ENCODE measurements at regions of chr19 and their contacts with region 1.

Region 1: DNA sequence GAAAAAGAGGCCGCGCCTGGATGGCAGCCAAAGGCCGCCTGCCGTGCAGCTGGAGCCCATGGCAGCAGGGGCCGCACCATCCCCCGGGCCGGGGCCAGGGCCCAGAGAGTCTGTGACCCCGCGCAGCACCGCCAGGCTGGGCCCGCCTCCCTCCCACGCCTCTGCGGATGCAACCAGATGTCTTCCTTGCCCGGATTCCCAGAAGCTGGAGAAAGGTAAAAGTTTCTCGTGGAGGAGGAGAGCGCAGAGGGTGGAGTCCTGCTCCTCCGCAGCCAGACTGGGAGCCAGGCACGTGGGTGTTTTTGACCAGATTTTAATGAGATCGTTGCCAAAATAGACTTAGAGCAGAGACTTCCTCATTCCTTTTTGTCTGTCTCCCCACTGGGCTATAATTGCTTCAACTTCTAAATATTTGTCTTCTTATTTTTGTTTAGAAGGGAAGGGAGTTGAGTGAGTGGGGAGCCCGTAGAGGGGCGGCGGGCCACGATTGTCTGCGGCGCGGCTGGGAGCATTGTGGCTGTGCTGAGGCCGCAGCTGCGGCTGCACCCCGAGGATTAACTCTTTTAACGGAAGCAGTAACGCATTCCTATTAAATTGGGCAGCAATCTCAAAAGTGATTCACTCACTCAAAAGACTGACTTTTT is 22.8 kb upstream of the NDUFS7 start:
- DNase-seq: no peak
- H3K4me3 Mint-ChIP-seq: no peak overlapping the region
- H3K27ac Mint-ChIP-seq: no peak overlapping the region
- H3K4me1 Mint-ChIP-seq: peaks cover 24% of the 10 kb centered on the region
- H3K27me3 Mint-ChIP-seq: no peaks in the 10 kb centered on the region

Region 2: DNA sequence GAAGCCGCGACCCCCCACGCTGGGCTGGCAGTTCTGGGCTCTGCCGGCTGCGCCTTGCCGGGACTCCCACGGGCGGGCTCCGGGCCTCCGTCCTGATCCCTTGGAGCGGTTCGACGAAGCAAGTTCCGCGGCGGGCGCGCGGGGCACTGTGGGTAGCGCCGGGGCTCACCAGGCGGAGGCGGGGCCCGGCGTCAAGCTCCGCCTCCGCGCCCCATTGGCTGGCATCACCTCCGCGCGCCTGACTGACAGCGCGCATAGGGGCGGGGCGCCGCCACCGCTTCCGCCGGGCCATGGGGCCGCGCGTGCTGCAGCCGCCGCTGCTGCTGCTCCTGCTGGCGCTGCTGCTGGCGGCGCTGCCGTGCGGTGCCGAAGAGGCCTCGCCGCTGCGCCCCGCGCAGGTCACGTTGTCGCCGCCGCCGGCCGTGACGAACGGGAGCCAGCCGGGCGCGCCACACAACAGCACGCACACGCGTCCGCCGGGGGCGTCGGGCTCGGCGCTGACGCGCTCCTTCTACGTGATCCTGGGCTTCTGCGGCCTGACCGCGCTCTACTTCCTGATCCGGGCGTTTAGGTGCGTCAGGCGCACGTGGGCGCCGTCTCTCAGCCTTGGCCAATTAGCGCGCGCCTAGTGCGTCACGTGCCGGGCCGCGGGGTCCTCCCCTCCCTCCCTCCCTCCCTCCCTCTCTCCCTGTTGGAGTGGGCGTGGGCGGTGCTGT is 85.5 kb before region 1 on chr19 and contains the start of gene FAM174C:
- intact Hi-C with region 1: loop called (anchors 5 kb)
- DNase-seq: peak; percentile 93
- H3K4me3 Mint-ChIP-seq: peak within 1 kb of the TSS; percentile 92
- H3K27ac Mint-ChIP-seq: peak within 1 kb of the TSS; percentile 96
- H3K4me1 Mint-ChIP-seq: peaks cover 37% of the 10 kb centered on the region
- H3K27me3 Mint-ChIP-seq: no peaks in the 10 kb centered on the region
- total RNA-seq, gene FAM174C: 91.7 and 99.4 TPM in 2 replicates